Activated naive CD4-positive, alpha-beta T cell treated with anti-CD3 and anti-CD28 coated beads, Interleukin-2, amount 10 ng/mL, durations not matched to agents 7 days and 5 days (primary cell): ENCODE measurements at regions of chr21 and their contacts with region 1.

Region 1: DNA sequence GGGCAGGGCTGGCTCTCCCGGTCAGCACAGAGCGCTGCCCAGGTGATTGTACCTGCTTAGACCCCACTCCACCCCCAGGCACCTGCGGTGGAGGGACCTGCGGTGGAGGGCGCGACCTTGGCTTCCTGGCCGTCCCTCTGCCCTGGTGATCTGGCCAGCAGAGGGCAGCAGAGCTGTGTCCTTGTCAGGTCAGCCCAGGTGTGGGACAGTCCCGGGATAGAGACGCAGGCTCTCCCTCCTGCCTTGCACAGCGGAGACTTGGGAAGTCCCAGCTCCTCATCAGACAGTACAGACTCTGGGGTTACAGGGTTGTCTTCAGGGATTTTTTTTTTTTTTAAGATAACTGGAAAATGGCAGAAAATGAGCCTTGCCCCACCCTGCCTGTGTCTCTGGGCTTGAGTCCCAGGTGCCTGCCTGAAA is 10.0 kb downstream of the SLX9 start:
- DNase-seq: peak; percentile 90
- H3K4me3 Mint-ChIP-seq: no peak overlapping the region
- H3K27ac Mint-ChIP-seq: peak overlapping the region; percentile 19
- H3K4me1 Mint-ChIP-seq: peaks cover 11% of the 10 kb centered on the region
- H3K27me3 Mint-ChIP-seq: no peaks in the 10 kb centered on the region

Region 2: GRCh38 chr21:44892536-44893277 is 57.1 kb before region 1 on chr21:
- CTCF ChIA-PET with region 1: no interaction called
- DNase-seq: peak; percentile 85
- H3K4me3 Mint-ChIP-seq: no peak overlapping the region
- H3K27ac Mint-ChIP-seq: peak overlapping the region; percentile 80
- H3K4me1 Mint-ChIP-seq: peaks cover 15% of the 10 kb centered on the region
- H3K27me3 Mint-ChIP-seq: no peaks in the 10 kb centered on the region

Region 3: GRCh38 chr21:44962403-44962966 is 12.7 kb after region 1 on chr21:
- CTCF ChIA-PET with region 1: interaction called, 13 read pairs
- DNase-seq: no peak
- H3K4me3 Mint-ChIP-seq: no peak overlapping the region
- H3K27ac Mint-ChIP-seq: no peak overlapping the region
- H3K4me1 Mint-ChIP-seq: peaks cover 27% of the 10 kb centered on the region
- H3K27me3 Mint-ChIP-seq: no peaks in the 10 kb centered on the region